Activated CD4-positive, alpha-beta T cell treated with anti-CD3 and anti-CD28 coated beads, Interleukin-2, amount 10 ng/mL, durations not matched to agents 24 days and 14 days (primary cell): ENCODE measurements at regions of chr10 and their contacts with region 1.

Region 1: GRCh38 chr10:3226960-3227744 is 54.6 kb upstream of the PITRM1 start:
- DNase-seq: no peak
- H3K4me3 Mint-ChIP-seq: peak overlapping the region; percentile 51
- H3K27ac Mint-ChIP-seq: no peak overlapping the region
- H3K4me1 Mint-ChIP-seq: peaks cover 17% of the 10 kb centered on the region
- H3K27me3 Mint-ChIP-seq: peaks cover 22% of the 10 kb centered on the region

Region 2: GRCh38 chr10:3178042-3178441 is 49.1 kb before region 1 on chr10:
- intact Hi-C with region 1: no loop called
- DNase-seq: no peak
- H3K4me3 Mint-ChIP-seq: no peak overlapping the region
- H3K27ac Mint-ChIP-seq: no peak overlapping the region
- H3K4me1 Mint-ChIP-seq: peaks cover 6% of the 10 kb centered on the region
- H3K27me3 Mint-ChIP-seq: peaks cover 57% of the 10 kb centered on the region

Region 3: GRCh38 chr10:3197348-3198003 is 29.7 kb before region 1 on chr10:
- intact Hi-C with region 1: loop called (anchors 1 kb)
- DNase-seq: peak; percentile 91
- H3K4me3 Mint-ChIP-seq: peak overlapping the region; percentile 67
- H3K27ac Mint-ChIP-seq: peak overlapping the region; percentile 81
- H3K4me1 Mint-ChIP-seq: peaks cover 17% of the 10 kb centered on the region
- H3K27me3 Mint-ChIP-seq: peaks cover 89% of the 10 kb centered on the region

Region 4: DNA sequence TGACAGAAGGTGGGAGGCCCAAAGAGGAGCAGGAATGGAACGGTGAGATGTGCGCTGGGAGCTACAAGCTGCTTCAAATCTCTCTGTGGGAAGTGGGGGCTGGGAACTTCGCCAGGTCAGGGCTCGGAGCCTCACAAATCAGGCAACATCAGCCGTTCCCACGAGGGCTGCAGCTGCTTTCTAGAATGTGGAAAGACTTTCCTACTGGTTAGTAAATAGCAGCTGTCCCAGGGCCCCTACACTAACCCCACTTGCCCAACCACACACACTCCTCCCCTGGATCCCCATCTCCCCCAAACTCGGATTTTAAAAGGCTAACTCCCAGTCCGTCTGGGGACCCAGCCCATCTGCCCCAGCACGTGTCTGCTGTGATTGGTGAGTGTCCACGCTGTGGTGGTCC is 13.9 kb before region 1 on chr10:
- intact Hi-C with region 1: no loop called
- DNase-seq: no peak
- H3K4me3 Mint-ChIP-seq: no peak overlapping the region
- H3K27ac Mint-ChIP-seq: no peak overlapping the region
- H3K4me1 Mint-ChIP-seq: no peaks in the 10 kb centered on the region
- H3K27me3 Mint-ChIP-seq: peaks cover 40% of the 10 kb centered on the region

Region 5: GRCh38 chr10:3339531-3339950 is 112.4 kb after region 1 on chr10:
- intact Hi-C with region 1: no loop called
- DNase-seq: no peak
- H3K4me3 Mint-ChIP-seq: no peak overlapping the region
- H3K27ac Mint-ChIP-seq: no peak overlapping the region
- H3K4me1 Mint-ChIP-seq: no peaks in the 10 kb centered on the region
- H3K27me3 Mint-ChIP-seq: peaks cover 15% of the 10 kb centered on the region

Region 6: GRCh38 chr10:3398825-3399646 is 171.9 kb after region 1 on chr10:
- intact Hi-C with region 1: no loop called
- DNase-seq: no peak
- H3K4me3 Mint-ChIP-seq: no peak overlapping the region
- H3K27ac Mint-ChIP-seq: no peak overlapping the region
- H3K4me1 Mint-ChIP-seq: no peaks in the 10 kb centered on the region
- H3K27me3 Mint-ChIP-seq: peaks cover 31% of the 10 kb centered on the region

Region 7: GRCh38 chr10:3467052-3467951 is 240.2 kb after region 1 on chr10:
- intact Hi-C with region 1: loop called (anchors 5 kb)
- DNase-seq: peak; percentile 79
- H3K4me3 Mint-ChIP-seq: peak overlapping the region; percentile 82
- H3K27ac Mint-ChIP-seq: peak overlapping the region; percentile 96
- H3K4me1 Mint-ChIP-seq: peaks cover 51% of the 10 kb centered on the region
- H3K27me3 Mint-ChIP-seq: no peaks in the 10 kb centered on the region

Region 8: GRCh38 chr10:3668276-3668965 is 441.3 kb after region 1 on chr10:
- intact Hi-C with region 1: loop called (anchors 5 kb)
- DNase-seq: peak; percentile 89
- H3K4me3 Mint-ChIP-seq: peak overlapping the region; percentile 86
- H3K27ac Mint-ChIP-seq: peak overlapping the region; percentile 92
- H3K4me1 Mint-ChIP-seq: peaks cover 34% of the 10 kb centered on the region
- H3K27me3 Mint-ChIP-seq: peaks cover 2% of the 10 kb centered on the region

Region 9: GRCh38 chr10:4241724-4242345 is 1014.7 kb after region 1 on chr10:
- intact Hi-C with region 1: loop called (anchors 10 kb)
- DNase-seq: no peak
- H3K4me3 Mint-ChIP-seq: no peak overlapping the region
- H3K27ac Mint-ChIP-seq: no peak overlapping the region
- H3K4me1 Mint-ChIP-seq: peaks cover 38% of the 10 kb centered on the region
- H3K27me3 Mint-ChIP-seq: no peaks in the 10 kb centered on the region